HCT116 (cell line): ENCODE measurements at regions of chr1 and their contacts with region 1.

Region 1: DNA sequence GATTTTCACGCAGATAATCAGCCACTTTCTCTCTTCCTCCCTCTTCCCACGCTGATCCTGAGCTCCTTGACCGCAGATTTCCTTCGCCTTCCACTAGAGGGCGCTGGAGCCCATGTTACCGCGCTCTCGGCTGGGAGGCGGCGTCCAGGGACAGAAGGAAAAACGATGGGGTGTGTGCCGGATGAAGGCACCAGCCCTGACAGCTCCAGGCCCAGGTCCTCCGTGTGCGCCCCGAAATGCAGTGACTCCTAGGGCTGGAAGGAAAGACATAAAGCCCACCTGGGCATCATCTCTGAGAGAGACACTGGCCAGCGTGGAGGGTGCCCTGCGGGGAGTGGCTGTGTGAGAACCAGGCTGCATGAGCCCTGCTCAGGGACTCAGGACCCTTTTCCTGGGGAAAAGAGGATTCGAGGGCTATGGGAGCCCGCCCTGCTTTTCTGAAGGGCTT is 44.9 kb upstream of the CYP2J2 start:
- DNase-seq: peak; percentile 39
- ATAC-seq: peak; percentile 99
- H3K4me3 ChIP-seq: no peak overlapping the region
- H3K27ac ChIP-seq: no peak overlapping the region
- H3K4me1 ChIP-seq: peaks cover 2 to 4% of the 10 kb centered on the region in 2 experiments; a peak in 2 of 4 replicates
- H3K27me3 ChIP-seq: peaks cover 10% of the 10 kb centered on the region; the same call in 1 of the 2 replicates
- CTCF ChIP-seq: peak; percentile 69 to 95 (median 83); a peak in 5 of 6 replicates
- POLR2A ChIP-seq: no peak
- RAD21 ChIP-seq: peak; percentile 87

Region 2: GRCh38 chr1:60126723-60127122 is 155.2 kb after region 1 on chr1:
- CTCF ChIA-PET with region 1: interaction called, 6 read pairs
- POLR2A ChIA-PET with region 1: no interaction called
- RAD21 ChIA-PET with region 1: no interaction called
- intact Hi-C with region 1: loop called (anchors 2 kb)
- DNase-seq: no peak
- ATAC-seq: no peak
- H3K4me3 ChIP-seq: no peak overlapping the region
- H3K27ac ChIP-seq: no peak overlapping the region
- H3K4me1 ChIP-seq: no peaks in the 10 kb centered on the region
- H3K27me3 ChIP-seq: no peaks in the 10 kb centered on the region
- CTCF ChIP-seq: peak in 1 of 3 experiments; percentile 15; a peak in 1 of 6 replicates
- POLR2A ChIP-seq: no peak
- RAD21 ChIP-seq: peak; percentile 32

Region 3: DNA sequence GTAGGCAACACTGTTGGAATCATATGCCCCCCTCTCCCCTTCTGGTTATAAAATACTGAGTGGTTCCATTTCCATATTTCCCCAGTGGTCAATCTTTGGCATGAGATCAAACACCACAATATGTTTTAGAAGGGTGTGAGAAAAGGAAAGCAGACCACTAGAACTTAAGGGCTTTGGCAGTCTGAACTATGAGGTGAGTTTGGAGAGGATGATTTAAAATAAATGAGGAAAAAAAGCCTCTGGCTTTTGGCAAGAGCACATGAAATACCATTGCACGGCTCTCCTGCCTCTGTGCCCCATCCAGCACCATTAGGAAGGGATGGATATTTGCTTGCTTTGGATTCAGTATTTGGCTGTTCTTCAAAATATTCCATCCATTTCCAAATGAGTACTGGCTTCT is 441.6 kb after region 1 on chr1:
- CTCF ChIA-PET with region 1: no interaction called
- POLR2A ChIA-PET with region 1: no interaction called
- RAD21 ChIA-PET with region 1: no interaction called
- intact Hi-C with region 1: loop called (anchors 10 kb)
- DNase-seq: no peak
- ATAC-seq: no peak
- H3K4me3 ChIP-seq: no peak overlapping the region
- H3K27ac ChIP-seq: no peak overlapping the region
- H3K4me1 ChIP-seq: no peaks in the 10 kb centered on the region
- H3K27me3 ChIP-seq: no peaks in the 10 kb centered on the region; the same call in 1 of the 2 replicates
- CTCF ChIP-seq: no peak
- POLR2A ChIP-seq: no peak
- RAD21 ChIP-seq: no peak

Region 4: DNA sequence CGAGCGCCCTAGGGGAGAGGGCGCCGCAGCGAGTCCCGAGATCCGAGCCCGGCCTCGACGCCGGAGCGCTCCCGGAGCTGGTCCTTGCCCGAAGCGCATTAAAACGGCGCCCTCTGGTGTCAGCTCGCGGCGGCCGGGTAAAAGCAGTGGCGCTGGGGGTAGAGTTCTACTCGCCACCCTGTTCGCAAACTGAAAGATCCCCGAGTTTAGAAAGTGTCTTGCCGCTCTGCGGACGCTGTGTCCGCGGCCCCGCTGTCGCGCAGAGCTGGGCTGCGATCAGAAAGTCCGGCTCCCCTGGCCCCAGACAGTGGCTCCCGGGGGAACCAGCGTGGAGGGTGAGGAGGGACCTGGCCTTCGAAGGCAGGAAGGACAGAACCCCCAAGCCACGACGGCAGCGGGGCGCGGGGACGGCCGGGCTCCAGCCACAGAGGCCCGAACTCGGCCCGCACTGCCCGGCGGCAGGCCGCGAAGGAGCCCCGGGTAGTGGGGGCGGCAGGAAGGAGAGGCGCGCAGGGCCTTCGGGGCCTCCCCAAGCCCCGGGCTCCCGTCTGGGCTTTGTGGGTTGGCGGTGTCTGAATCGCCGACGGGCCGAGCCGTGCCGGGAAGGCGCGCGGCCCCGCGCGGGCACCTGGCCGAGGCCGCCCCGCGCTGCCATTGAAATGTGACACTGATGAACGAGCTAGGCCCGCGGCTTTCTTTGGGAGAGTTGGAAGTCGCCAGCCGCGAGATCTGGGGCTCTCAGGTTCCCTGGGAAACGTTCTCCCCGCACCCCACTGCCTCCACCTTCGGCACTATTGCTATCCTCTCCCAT is 1071.7 kb after region 1 on chr1:
- CTCF ChIA-PET with region 1: interaction called, 10 read pairs
- POLR2A ChIA-PET with region 1: no interaction called
- RAD21 ChIA-PET with region 1: no interaction called
- intact Hi-C with region 1: loop called (anchors 2 kb)
- DNase-seq: peak; percentile 28
- ATAC-seq: peak; percentile 99
- H3K4me3 ChIP-seq: peak overlapping the region; percentile 34 to 54
- H3K27ac ChIP-seq: no peak overlapping the region
- H3K4me1 ChIP-seq: peaks cover 0 to 9% of the 10 kb centered on the region in 2 experiments; a peak in 1 of 4 replicates
- H3K27me3 ChIP-seq: no peaks in the 10 kb centered on the region
- CTCF ChIP-seq: peak; percentile 75 to 81 (median 77)
- POLR2A ChIP-seq: no peak
- RAD21 ChIP-seq: peak; percentile 86

Region 5: GRCh38 chr1:61851849-61852669 is 1880.6 kb after region 1 on chr1:
- CTCF ChIA-PET with region 1: no interaction called
- POLR2A ChIA-PET with region 1: no interaction called
- RAD21 ChIA-PET with region 1: interaction called in 1 of 2 experiments, 3 read pairs
- intact Hi-C with region 1: loop called (anchors 10 kb)
- DNase-seq: peak; percentile 56
- ATAC-seq: peak; percentile 84
- H3K4me3 ChIP-seq: no peak overlapping the region
- H3K27ac ChIP-seq: no peak overlapping the region
- H3K4me1 ChIP-seq: no peaks in the 10 kb centered on the region
- H3K27me3 ChIP-seq: no peaks in the 10 kb centered on the region
- CTCF ChIP-seq: peak; percentile 57 to 74 (median 60); a peak in 5 of 6 replicates
- POLR2A ChIP-seq: no peak
- RAD21 ChIP-seq: peak; percentile 80